CD4-positive, alpha-beta memory T cell (primary cell): ENCODE measurements at regions of chr3 and their contacts with region 1.

Region 1: GRCh38 chr3:134449277-134449676 is 36.5 kb downstream of the ANAPC13 start:
- DNase-seq: no peak
- H3K4me3 ChIP-seq: no peak overlapping the region
- H3K4me3 Mint-ChIP-seq: no peak overlapping the region
- H3K27ac ChIP-seq: no peak overlapping the region
- H3K27ac Mint-ChIP-seq: no peak overlapping the region
- H3K4me1 ChIP-seq: no peaks in the 10 kb centered on the region
- H3K4me1 Mint-ChIP-seq: no peaks in the 10 kb centered on the region
- H3K27me3 ChIP-seq: no peaks in the 10 kb centered on the region
- H3K27me3 Mint-ChIP-seq: peaks cover 4 to 19% of the 10 kb centered on the region in 2 donors

Region 2: GRCh38 chr3:134308350-134308891 is 140.9 kb before region 1 on chr3:
- CTCF ChIA-PET with region 1: interaction called, 11 read pairs
- POLR2A ChIA-PET with region 1: no interaction called
- intact Hi-C with region 1: no loop called
- DNase-seq: peak; percentile 68 to 74 (median 71)
- H3K4me3 ChIP-seq: no peak overlapping the region
- H3K4me3 Mint-ChIP-seq: peak overlapping the region in 4 of 8 donors; percentile 3 to 70 (median 67)
- H3K27ac ChIP-seq: no peak overlapping the region
- H3K27ac Mint-ChIP-seq: no peak overlapping the region
- H3K4me1 ChIP-seq: peaks cover under 1% of the 10 kb centered on the region
- H3K4me1 Mint-ChIP-seq: peaks cover 2 to 7% (median 3%) of the 10 kb centered on the region in 4 donors
- H3K27me3 ChIP-seq: peaks cover 5% of the 10 kb centered on the region
- H3K27me3 Mint-ChIP-seq: peaks cover 21% of the 10 kb centered on the region in 2 donors

Region 3: GRCh38 chr3:134392336-134392983 is 56.8 kb before region 1 on chr3:
- CTCF ChIA-PET with region 1: no interaction called
- POLR2A ChIA-PET with region 1: no interaction called
- intact Hi-C with region 1: no loop called
- DNase-seq: no peak
- H3K4me3 ChIP-seq: no peak overlapping the region
- H3K4me3 Mint-ChIP-seq: no peak overlapping the region
- H3K27ac ChIP-seq: no peak overlapping the region
- H3K27ac Mint-ChIP-seq: no peak overlapping the region
- H3K4me1 ChIP-seq: no peaks in the 10 kb centered on the region
- H3K4me1 Mint-ChIP-seq: no peaks in the 10 kb centered on the region
- H3K27me3 ChIP-seq: peaks cover 8% of the 10 kb centered on the region
- H3K27me3 Mint-ChIP-seq: peaks cover 28 to 31% of the 10 kb centered on the region in 2 donors